Activated CD4-positive, alpha-beta T cell treated with anti-CD3 and anti-CD28 coated beads, Interleukin-2, amount 10 ng/mL, durations not matched to agents 24 days and 14 days (primary cell): ENCODE measurements at regions of chr19 and their contacts with region 1.

Region 1: GRCh38 chr19:51020988-51021651 is 1.6 kb upstream of the KLK10 start:
- DNase-seq: peak; percentile 60
- H3K4me3 Mint-ChIP-seq: no peak overlapping the region
- H3K27ac Mint-ChIP-seq: no peak overlapping the region
- H3K4me1 Mint-ChIP-seq: peaks cover 12% of the 10 kb centered on the region
- H3K27me3 Mint-ChIP-seq: peaks cover 40% of the 10 kb centered on the region

Region 2: GRCh38 chr19:51097166-51097738 is 76.1 kb after region 1 on chr19:
- intact Hi-C with region 1: loop called (anchors 5 kb)
- DNase-seq: peak; percentile 87
- H3K4me3 Mint-ChIP-seq: no peak overlapping the region
- H3K27ac Mint-ChIP-seq: no peak overlapping the region
- H3K4me1 Mint-ChIP-seq: peaks cover 20% of the 10 kb centered on the region
- H3K27me3 Mint-ChIP-seq: no peaks in the 10 kb centered on the region

Region 3: DNA sequence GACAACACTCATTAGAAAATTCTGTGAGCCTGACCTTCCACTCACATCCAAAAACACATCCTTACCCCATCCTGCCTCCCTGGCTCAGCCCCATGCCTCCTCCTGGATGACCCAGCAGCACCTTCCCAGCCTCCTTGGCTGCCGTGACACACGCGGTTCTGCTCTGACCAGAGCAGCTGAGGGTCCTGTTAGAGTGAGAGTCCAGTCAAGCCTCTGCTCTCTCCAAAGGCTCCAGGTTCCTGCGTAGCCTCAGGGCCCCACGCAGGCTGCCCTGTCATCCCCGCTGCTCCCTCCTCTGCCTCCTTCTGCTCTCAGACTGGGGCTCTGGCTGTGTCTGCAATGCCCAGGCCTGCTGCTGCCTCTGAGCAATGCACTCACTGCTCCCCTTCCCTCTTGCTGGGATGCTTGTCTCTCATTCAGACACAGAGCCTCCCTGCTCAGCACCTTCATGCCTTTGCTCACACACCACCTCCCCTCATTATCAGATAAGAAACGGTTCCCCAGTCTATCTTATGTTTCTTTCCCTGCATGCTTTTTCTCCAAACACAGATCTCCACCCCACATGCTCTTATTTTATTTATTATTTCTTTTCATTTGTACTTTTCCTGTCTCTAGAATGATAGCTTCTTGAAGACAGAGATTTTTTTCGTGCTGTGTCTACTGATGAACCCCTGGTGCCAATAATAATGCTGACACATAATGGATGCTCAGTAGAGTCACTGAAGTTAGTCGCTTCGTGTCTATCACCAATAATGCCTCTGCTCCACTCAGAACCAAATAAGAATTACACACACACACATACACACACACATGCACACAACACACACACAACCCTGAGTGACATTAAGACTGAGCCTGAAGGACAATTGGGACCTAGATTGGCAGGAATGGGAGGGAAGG is 520.6 kb after region 1 on chr19:
- intact Hi-C with region 1: no loop called
- DNase-seq: peak; percentile 42
- H3K4me3 Mint-ChIP-seq: no peak overlapping the region
- H3K27ac Mint-ChIP-seq: no peak overlapping the region
- H3K4me1 Mint-ChIP-seq: peaks cover 5% of the 10 kb centered on the region
- H3K27me3 Mint-ChIP-seq: peaks cover 25% of the 10 kb centered on the region